ENCODE measurements at regions of chr2 and their contacts with region 1.

Region 1: GRCh38 chr2:84856787-84857186 is 24.1 kb downstream of the TRABD2A start:
- DNase-seq: no peak
- ATAC-seq: peak; percentile 69
- H3K4me3 Mint-ChIP-seq: peak overlapping the region; percentile 82
- H3K27ac Mint-ChIP-seq: peak overlapping the region; percentile 97
- H3K4me1 Mint-ChIP-seq: peaks cover 80% of the 10 kb centered on the region
- H3K27me3 Mint-ChIP-seq: no peaks in the 10 kb centered on the region

Region 2: DNA sequence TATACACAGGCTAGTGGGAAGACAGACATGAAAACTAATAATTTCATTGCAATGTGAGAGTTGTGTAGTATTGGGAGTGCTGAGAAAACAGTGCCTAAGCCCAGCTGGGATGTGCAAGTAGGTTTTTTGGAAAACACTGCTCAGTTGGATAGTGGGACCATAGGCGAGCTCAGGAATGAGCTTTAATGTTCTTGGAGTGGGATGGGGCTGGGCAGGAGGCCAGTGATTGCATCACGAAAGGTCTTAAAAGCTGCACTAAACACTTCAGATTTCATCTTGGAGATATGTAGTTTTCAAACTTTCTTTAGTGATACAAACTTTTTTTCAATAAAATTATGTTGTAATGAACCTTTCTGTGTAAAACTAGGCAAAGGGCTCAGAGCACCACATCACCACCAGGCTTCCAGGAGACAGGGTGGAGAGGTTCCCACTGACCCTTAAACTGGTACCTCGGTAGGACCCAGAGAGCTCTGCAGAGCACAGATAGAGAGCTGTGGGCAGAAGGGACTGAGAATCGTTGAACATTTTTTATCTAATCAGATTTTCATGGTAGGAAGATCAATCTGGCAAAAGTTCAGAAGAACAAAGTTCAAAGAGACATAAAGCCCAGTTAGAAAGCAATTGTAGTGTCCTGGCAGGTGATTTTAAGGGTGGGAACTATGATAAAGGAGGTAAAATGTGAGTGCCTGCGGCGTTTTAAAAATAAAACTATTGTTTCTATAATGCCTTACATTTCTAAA is 152.1 kb before region 1 on chr2:
- POLR2A ChIA-PET with region 1: no interaction called
- DNase-seq: no peak
- ATAC-seq: no peak
- H3K4me3 Mint-ChIP-seq: no peak overlapping the region
- H3K27ac Mint-ChIP-seq: no peak overlapping the region
- H3K4me1 Mint-ChIP-seq: peaks cover 5% of the 10 kb centered on the region
- H3K27me3 Mint-ChIP-seq: no peaks in the 10 kb centered on the region

Region 3: GRCh38 chr2:84846041-84846663 is 10.6 kb before region 1 on chr2:
- POLR2A ChIA-PET with region 1: interaction called, 24 read pairs
- DNase-seq: no peak
- ATAC-seq: peak; percentile 78
- H3K4me3 Mint-ChIP-seq: peak overlapping the region; percentile 69
- H3K27ac Mint-ChIP-seq: peak overlapping the region; percentile 93
- H3K4me1 Mint-ChIP-seq: peaks cover 84% of the 10 kb centered on the region
- H3K27me3 Mint-ChIP-seq: no peaks in the 10 kb centered on the region

Region 4: DNA sequence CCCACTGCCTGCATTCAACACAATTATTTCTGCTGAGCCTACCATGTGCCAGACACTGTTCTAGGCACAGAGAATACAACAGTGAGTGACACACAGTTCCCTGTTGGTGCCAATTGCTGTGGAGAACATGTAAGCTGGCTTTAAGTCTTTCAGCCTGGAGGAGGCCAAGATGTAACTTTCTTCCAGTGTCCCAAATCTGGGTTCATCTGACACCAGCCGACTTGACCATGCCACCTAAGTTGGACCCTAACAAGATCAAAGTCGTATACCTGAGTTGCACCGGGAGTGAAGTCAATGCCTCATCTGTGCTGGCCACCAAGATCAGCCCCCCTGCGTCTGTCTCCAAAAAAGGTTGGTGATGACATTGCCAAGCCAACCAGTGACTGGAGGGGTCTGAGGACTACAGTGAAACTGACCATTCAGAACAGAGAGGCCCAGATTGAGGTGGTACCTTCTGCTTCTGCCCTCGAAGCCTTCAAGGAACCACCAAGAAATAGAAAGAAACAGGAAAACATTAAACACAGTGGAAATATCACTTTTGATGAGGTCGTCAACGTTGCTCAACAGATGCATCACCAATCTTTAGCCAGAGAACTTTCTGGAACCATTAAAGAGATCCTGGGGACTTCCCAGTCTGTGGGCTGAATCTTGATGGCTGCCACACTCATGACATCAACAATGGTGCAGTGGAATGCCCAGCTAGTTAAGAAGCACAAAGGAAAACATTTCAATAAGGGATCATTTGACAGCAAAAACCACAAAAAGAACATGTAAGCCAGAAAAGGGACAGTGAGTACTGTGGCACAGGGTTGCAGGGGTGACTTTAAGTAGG is 17.8 kb after region 1 on chr2:
- POLR2A ChIA-PET with region 1: interaction called, 27 read pairs
- DNase-seq: peak; percentile 23
- ATAC-seq: peak; percentile 6
- H3K4me3 Mint-ChIP-seq: peak overlapping the region; percentile 74
- H3K27ac Mint-ChIP-seq: peak overlapping the region; percentile 95
- H3K4me1 Mint-ChIP-seq: peaks cover 74% of the 10 kb centered on the region
- H3K27me3 Mint-ChIP-seq: no peaks in the 10 kb centered on the region

Region 5: DNA sequence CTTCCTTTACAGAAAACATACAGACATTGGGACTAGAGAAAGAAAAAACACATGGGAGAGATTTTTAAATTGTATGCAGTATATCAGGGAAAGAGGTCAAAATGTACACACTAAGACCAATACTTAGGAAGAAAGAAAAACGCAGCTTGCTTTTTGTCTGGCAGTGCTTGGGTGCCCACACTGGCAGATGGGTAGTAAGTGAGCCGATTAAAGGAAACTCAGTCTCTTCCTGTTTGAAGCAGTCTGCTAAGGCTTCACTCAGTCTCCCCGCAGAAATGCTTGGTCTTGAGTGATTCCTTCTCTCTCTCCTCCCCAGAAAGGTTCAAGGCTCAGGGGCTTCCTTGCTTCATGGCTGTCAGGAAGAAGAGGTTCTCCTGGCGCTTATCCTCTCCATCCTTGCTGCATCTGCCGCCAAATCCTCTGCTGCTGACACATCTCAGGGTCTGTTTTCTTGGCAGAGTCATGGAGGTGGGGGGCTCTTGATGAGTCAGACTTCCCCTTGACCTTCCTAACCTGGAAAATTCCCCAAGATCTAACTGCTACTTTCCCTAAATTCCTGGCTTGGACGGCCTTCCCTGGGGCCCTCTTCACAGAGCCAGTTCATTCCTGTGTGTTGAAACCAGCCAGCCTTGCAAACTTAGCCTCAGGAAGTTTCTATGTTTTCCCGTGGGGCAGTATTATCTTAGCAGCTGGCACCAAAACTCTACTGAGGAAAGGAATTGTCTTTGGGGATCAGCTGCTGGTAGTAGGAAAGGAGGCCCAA is 38.2 kb after region 1 on chr2:
- POLR2A ChIA-PET with region 1: no interaction called
- DNase-seq: no peak
- ATAC-seq: peak; percentile 45
- H3K4me3 Mint-ChIP-seq: peak overlapping the region; percentile 62
- H3K27ac Mint-ChIP-seq: peak overlapping the region; percentile 75
- H3K4me1 Mint-ChIP-seq: peaks cover 59% of the 10 kb centered on the region
- H3K27me3 Mint-ChIP-seq: no peaks in the 10 kb centered on the region

Region 6: DNA sequence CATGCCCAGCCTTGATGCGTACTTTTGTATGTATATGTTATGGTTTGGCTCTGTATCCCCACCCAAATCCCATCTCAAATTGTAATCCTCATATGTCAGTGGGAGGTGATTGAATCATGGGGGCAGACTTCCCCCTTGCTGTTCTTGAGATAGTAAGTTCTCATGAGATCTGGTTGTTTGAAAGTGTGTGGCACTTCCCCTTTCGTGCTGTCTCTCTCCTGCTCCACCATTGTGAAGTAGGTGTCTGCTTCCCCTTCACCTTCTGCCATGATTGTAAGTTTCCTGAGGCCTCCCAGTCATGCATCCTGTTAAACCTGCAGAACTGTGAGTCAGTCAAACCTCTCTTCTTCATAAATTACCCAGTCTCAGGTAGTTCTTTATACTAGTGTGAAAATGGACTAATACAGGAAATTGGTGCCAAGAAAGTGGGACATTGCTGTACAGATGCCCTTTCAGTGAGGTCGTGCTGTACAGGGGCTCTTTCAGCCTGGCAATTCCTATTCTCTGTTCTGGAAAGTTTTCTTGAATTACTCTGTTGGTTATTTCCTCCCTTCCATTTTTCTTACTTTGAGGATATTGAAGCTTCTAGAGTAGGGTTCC is 152.3 kb after region 1 on chr2:
- POLR2A ChIA-PET with region 1: no interaction called
- DNase-seq: no peak
- ATAC-seq: no peak
- H3K4me3 Mint-ChIP-seq: no peak overlapping the region
- H3K27ac Mint-ChIP-seq: peak overlapping the region; percentile 37
- H3K4me1 Mint-ChIP-seq: peaks cover 41% of the 10 kb centered on the region
- H3K27me3 Mint-ChIP-seq: no peaks in the 10 kb centered on the region